ENCODE measurements at regions of chr3 and their contacts with region 1.

Region 1: GRCh38 chr3:184250167-184250828 is 826 bp downstream of the EEF1AKMT4 start:
- DNase-seq: peak; percentile 94
- H3K4me3 ChIP-seq: peak overlapping the region; percentile 81 to 97 (median 92)
- H3K27ac ChIP-seq: peak overlapping the region; percentile 76 to 89 (median 85)
- H3K4me1 ChIP-seq: peaks cover 5 to 33% (median 26%) of the 10 kb centered on the region in 4 donors
- H3K27me3 ChIP-seq: no peaks in the 10 kb centered on the region
- CTCF ChIP-seq: peak in 5 of 7 experiments; percentile 83 to 96 (median 91)
- EP300 ChIP-seq: no peak
- POLR2A ChIP-seq: no peak

Region 2: GRCh38 chr3:184143327-184143726 is 107.0 kb before region 1 on chr3:
- intact Hi-C with region 1: loop called (anchors 5 kb)
- DNase-seq: no peak
- H3K4me3 ChIP-seq: no peak overlapping the region
- H3K27ac ChIP-seq: no peak overlapping the region
- H3K4me1 ChIP-seq: peaks cover 4 to 20% (median 12%) of the 10 kb centered on the region in 4 donors
- H3K27me3 ChIP-seq: no peaks in the 10 kb centered on the region
- CTCF ChIP-seq: no peak
- EP300 ChIP-seq: no peak
- POLR2A ChIP-seq: no peak

Region 3: GRCh38 chr3:184185461-184186308 is 64.6 kb before region 1 on chr3 and contains the start of gene ABCF3:
- intact Hi-C with region 1: loop called (anchors 10 kb)
- DNase-seq: peak; percentile 100
- H3K4me3 ChIP-seq: peak within 1 kb of the TSS; percentile 65 to 96 (median 72)
- H3K27ac ChIP-seq: peak within 1 kb of the TSS; percentile 83 to 90 (median 86)
- H3K4me1 ChIP-seq: peaks cover 22 to 44% (median 38%) of the 10 kb centered on the region in 4 donors
- H3K27me3 ChIP-seq: no peaks in the 10 kb centered on the region
- CTCF ChIP-seq: no peak
- EP300 ChIP-seq: no peak
- POLR2A ChIP-seq: peak in 2 of 4 donors; percentile 19 to 69
- total RNA-seq, gene ABCF3: 21.6 to 194 (median 55.9) TPM

Region 4: GRCh38 chr3:184289426-184289938 is 39.2 kb after region 1 on chr3:
- intact Hi-C with region 1: no loop called
- DNase-seq: peak; percentile 59 to 64
- H3K4me3 ChIP-seq: no peak overlapping the region
- H3K27ac ChIP-seq: no peak overlapping the region
- H3K4me1 ChIP-seq: peaks cover 0 to 5% (median 0%) of the 10 kb centered on the region in 4 donors
- H3K27me3 ChIP-seq: peaks cover 0 to 25% (median 0%) of the 10 kb centered on the region in 3 donors
- CTCF ChIP-seq: peak in 4 of 7 experiments; percentile 32 to 53 (median 44)
- EP300 ChIP-seq: no peak
- POLR2A ChIP-seq: no peak

Region 5: GRCh38 chr3:184864000-184864399 is 613.7 kb after region 1 on chr3:
- intact Hi-C with region 1: no loop called
- DNase-seq: no peak
- H3K4me3 ChIP-seq: no peak overlapping the region
- H3K27ac ChIP-seq: no peak overlapping the region
- H3K4me1 ChIP-seq: no peaks in the 10 kb centered on the region
- H3K27me3 ChIP-seq: no peaks in the 10 kb centered on the region
- CTCF ChIP-seq: no peak
- EP300 ChIP-seq: no peak
- POLR2A ChIP-seq: no peak